CD8-positive, alpha-beta T cell (primary cell): ENCODE measurements at regions of chr1 and their contacts with region 1.

Region 1: GRCh38 chr1:1919304-1920056 is 401 bp upstream of the TMEM52 start:
- DNase-seq: peak; percentile 97 to 100 (median 99)
- ATAC-seq: peak; percentile 89
- H3K4me3 ChIP-seq: peak overlapping the region; percentile 39 to 74
- H3K4me3 Mint-ChIP-seq: peak overlapping the region; percentile 47
- H3K27ac ChIP-seq: peak overlapping the region in 1 of 2 experiments; percentile 28
- H3K27ac Mint-ChIP-seq: peak overlapping the region; percentile 5
- H3K4me1 ChIP-seq: peaks cover 17% of the 10 kb centered on the region
- H3K4me1 Mint-ChIP-seq: peaks cover 3% of the 10 kb centered on the region
- H3K27me3 ChIP-seq: no peaks in the 10 kb centered on the region
- H3K27me3 Mint-ChIP-seq: no peaks in the 10 kb centered on the region
- CTCF ChIP-seq: no peak

Region 2: GRCh38 chr1:1489231-1489630 is 430.2 kb before region 1 on chr1:
- CTCF ChIA-PET with region 1: no interaction called
- POLR2A ChIA-PET with region 1: no interaction called
- intact Hi-C with region 1: no loop called
- DNase-seq: no peak
- ATAC-seq: no peak
- H3K4me3 ChIP-seq: no peak overlapping the region
- H3K4me3 Mint-ChIP-seq: no peak overlapping the region
- H3K27ac ChIP-seq: no peak overlapping the region
- H3K27ac Mint-ChIP-seq: no peak overlapping the region
- H3K4me1 ChIP-seq: no peaks in the 10 kb centered on the region
- H3K4me1 Mint-ChIP-seq: no peaks in the 10 kb centered on the region
- H3K27me3 ChIP-seq: no peaks in the 10 kb centered on the region
- H3K27me3 Mint-ChIP-seq: no peaks in the 10 kb centered on the region
- CTCF ChIP-seq: no peak

Region 3: DNA sequence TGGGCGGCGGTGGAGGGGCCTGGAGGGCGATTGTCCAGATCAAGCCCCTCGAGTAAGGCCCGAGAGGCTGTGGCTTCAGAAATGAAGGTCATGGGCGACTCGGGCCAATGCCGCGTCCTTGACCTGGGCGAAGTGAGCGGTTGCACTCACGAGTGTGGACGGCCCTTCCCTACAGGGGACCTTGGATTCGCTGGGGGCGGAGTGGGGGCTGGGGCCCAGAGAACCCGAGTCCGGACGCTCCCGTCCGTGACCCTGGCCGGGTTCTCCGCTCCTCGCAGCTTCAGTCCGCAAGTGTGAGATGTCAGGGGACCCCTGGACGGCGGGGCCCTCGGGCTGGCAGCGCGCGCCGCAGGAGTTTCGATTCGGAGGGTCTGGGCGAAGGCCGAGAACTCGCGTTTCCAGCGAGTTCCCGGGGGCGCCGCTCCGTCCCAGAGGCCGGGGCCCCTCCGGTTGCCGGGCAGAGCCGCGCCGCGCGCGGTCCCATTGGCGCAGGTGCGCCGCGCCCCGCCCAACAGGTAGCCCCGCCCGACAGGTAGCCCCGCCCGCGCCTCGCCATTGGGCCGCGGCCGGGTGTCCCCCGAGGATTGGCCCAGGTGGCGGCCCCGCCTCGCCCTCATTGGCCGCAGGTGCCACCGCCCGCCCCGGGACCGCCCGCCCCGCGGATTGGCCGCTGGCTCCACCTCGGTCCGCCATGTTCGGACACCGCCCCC is 130.4 kb after region 1 on chr1 and contains the start of gene PRKCZ:
- CTCF ChIA-PET with region 1: no interaction called
- POLR2A ChIA-PET with region 1: no interaction called
- intact Hi-C with region 1: loop called in 1 of 2 experiments (anchors 1 kb)
- DNase-seq: peak; percentile 90 to 98 (median 95)
- ATAC-seq: peak; percentile 97
- H3K4me3 ChIP-seq: peak within 1 kb of the TSS; percentile 76 to 88
- H3K4me3 Mint-ChIP-seq: peak within 1 kb of the TSS; percentile 80
- H3K27ac ChIP-seq: peak within 1 kb of the TSS; percentile 33 to 64
- H3K27ac Mint-ChIP-seq: no peak within 1 kb of the TSS
- H3K4me1 ChIP-seq: peaks cover 30% of the 10 kb centered on the region
- H3K4me1 Mint-ChIP-seq: peaks cover 28% of the 10 kb centered on the region
- H3K27me3 ChIP-seq: peaks cover 0 to 5% of the 10 kb centered on the region in 2 experiments
- H3K27me3 Mint-ChIP-seq: no peaks in the 10 kb centered on the region
- CTCF ChIP-seq: no peak
- total RNA-seq, gene PRKCZ: 17.1 to 19.6 TPM

Region 4: DNA sequence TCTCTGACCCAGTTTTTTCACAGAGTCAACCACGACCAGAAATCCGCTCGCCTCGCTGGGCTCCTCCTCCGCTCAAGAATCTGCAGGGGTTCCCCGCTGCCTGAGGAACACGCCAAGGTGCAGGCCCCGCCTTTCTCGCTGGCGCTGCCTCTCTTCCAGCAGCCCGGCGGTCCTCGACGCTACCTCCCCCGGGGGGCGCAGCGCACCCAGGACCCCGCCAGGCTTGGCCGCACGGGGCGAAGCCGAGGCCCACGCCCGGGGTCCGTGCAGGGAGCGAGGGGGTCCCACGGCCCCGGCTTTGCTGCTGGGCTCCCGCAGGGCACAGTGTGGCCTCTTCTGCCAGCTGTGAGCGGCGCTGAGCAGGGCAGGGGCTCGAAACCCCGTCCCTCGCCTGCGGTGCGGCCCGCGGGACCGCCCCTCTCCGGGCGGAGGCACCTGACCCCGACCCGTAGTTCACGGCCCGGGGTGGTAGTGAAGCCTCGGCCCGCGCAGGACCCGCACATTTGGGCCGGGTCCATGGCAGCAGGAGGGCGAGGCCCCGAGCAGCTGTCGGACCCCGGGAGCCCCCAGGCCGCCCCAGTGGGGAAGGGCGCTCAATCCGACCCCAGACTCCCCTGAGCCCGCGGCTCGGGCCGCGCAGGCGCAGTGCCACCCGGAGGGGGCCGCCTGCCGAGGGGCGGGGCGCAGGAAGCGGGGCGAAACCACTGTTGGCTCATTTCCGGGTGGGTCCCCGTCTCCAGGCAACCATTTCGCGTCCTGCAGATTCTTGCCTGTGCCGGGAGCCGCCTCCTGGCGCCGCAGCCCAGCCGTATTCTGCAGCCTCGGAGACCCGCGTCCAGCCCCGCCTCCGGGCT is 723.3 kb after region 1 on chr1:
- CTCF ChIA-PET with region 1: no interaction called
- POLR2A ChIA-PET with region 1: no interaction called
- intact Hi-C with region 1: loop called in 1 of 2 experiments (anchors 10 kb)
- DNase-seq: peak; percentile 88 to 97 (median 96)
- ATAC-seq: peak; percentile 84
- H3K4me3 ChIP-seq: peak overlapping the region; percentile 63 to 95
- H3K4me3 Mint-ChIP-seq: peak overlapping the region; percentile 85
- H3K27ac ChIP-seq: peak overlapping the region; percentile 91 to 93
- H3K27ac Mint-ChIP-seq: peak overlapping the region; percentile 88
- H3K4me1 ChIP-seq: peaks cover 17% of the 10 kb centered on the region
- H3K4me1 Mint-ChIP-seq: peaks cover 13% of the 10 kb centered on the region
- H3K27me3 ChIP-seq: no peaks in the 10 kb centered on the region
- H3K27me3 Mint-ChIP-seq: no peaks in the 10 kb centered on the region
- CTCF ChIP-seq: no peak